Activated CD4-positive, alpha-beta memory T cell treated with anti-CD3 and anti-CD28 coated beads for 36 hours (primary cell): ENCODE measurements at regions of chr1 and their contacts with region 1.

Region 1: DNA sequence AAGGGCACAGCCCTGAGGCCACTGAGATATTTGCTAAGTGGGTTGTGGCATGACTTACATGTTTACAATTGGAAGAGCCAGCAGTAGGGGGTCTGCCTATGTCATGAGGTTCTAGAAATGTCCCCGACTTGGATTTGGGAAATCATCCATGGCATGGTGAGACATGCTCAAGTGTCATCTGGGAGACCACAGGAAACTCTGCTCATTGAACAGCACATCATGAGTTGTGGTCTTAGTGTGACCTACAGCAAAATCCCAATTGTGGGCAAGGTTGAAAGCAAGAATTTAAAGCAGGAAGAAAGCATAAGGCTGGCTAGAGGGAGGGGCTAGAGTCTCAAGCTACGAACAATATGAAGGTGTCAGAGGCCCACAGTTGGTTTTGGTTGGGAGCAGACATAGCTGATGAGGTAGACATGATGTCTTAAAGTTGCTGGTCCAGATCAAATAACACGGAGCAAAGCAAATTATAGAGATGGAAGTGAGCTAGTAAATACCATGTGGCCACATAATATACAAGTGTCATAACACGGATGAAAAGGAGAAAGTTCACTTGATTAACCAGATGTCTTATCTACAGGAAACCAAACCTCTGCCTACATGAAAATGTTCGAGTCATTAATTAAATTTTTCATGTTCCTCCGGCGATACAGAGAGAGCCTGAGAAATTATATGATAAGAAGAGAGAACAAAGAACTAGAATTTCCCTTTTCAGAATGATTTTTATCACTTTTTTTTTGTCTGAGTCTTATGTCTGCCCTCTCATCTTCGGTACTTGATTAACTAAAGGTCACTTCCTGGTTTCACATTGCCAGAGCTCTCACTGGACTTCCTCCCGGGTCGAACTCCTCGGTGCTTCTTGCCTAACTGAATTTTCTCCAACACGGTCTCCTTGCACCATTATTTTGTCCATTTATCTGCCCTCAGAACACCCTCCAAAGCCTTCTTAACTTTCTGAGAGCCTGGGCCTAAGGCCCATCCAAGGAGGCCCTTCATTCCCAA is 67.4 kb upstream of the DUSP10 start:
- DNase-seq: no peak
- H3K4me3 Mint-ChIP-seq: no peak overlapping the region
- H3K27ac Mint-ChIP-seq: no peak overlapping the region
- H3K4me1 Mint-ChIP-seq: peaks cover 35% of the 10 kb centered on the region
- H3K27me3 Mint-ChIP-seq: no peaks in the 10 kb centered on the region

Region 2: GRCh38 chr1:221839796-221840395 is 30.6 kb after region 1 on chr1:
- CTCF ChIA-PET with region 1: interaction called, 4 read pairs
- POLR2A ChIA-PET with region 1: no interaction called
- intact Hi-C with region 1: loop called (anchors 1 kb)
- DNase-seq: peak; percentile 88
- H3K4me3 Mint-ChIP-seq: no peak overlapping the region
- H3K27ac Mint-ChIP-seq: peak overlapping the region; percentile 74
- H3K4me1 Mint-ChIP-seq: peaks cover 38% of the 10 kb centered on the region
- H3K27me3 Mint-ChIP-seq: peaks cover 6% of the 10 kb centered on the region